Activated B cell treated with CpG ODN at 0.5 μM for 24 hours (primary cell): ENCODE measurements at regions of chr16 and their contacts with region 1.

Region 1: DNA sequence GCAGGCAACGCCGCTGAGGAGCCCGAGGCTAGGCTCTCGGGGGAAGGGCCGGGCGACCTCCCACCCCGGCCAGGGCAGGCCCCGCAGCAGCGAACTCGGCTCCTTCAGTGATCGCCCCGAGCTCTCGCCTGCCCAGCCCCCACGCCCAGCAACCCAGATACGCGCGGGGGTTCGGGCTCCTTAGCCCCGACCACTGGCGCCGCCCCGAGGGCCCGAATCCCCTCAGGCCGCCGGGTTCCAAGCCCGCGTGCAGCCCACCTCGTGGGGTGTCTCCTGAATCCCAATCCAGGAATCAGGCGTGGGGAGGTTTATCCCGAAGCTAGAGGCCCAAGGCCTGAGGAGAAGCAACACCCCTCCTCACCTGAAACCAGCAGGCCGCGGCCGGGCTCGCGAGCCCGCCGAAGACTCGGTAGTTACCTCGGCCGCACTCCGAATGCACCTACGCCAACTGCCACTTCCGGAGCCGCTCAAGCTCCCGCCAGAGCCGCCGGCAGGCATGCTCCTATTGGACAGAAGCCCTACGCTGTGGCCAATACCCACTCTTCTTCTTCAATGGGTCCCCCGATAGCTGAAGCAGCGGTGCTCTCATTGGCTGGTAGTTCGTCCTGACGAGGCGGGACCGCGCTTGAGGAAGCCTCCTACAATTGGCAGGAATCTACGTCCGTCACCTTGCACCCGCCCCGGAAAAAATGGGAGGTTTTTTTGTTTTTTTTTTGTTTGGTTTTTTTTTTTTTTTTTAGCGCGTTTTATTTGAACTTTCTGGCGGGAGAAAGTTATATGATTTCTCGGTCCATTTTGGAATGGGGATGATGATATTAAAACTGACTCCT is at the start of gene RFWD3:
- DNase-seq: peak; percentile 78
- ATAC-seq: peak; percentile 99
- H3K4me3 Mint-ChIP-seq: peak within 1 kb of the TSS; percentile 94
- H3K27ac Mint-ChIP-seq: peak within 1 kb of the TSS; percentile 90
- H3K4me1 Mint-ChIP-seq: peaks cover 38% of the 10 kb centered on the region
- H3K27me3 Mint-ChIP-seq: no peaks in the 10 kb centered on the region
- CTCF ChIP-seq: no peak
- total RNA-seq, gene RFWD3: 57.9 and 63.2 TPM in 2 replicates

Region 2: GRCh38 chr16:74684131-74684530 is 17.5 kb after region 1 on chr16:
- CTCF ChIA-PET with region 1: no interaction called
- POLR2A ChIA-PET with region 1: interaction called, 28 read pairs
- intact Hi-C with region 1: loop called (anchors 2 kb)
- DNase-seq: no peak
- ATAC-seq: no peak
- H3K4me3 Mint-ChIP-seq: peak overlapping the region; percentile 7
- H3K27ac Mint-ChIP-seq: no peak overlapping the region
- H3K4me1 Mint-ChIP-seq: peaks cover 9% of the 10 kb centered on the region
- H3K27me3 Mint-ChIP-seq: no peaks in the 10 kb centered on the region
- CTCF ChIP-seq: no peak

Region 3: DNA sequence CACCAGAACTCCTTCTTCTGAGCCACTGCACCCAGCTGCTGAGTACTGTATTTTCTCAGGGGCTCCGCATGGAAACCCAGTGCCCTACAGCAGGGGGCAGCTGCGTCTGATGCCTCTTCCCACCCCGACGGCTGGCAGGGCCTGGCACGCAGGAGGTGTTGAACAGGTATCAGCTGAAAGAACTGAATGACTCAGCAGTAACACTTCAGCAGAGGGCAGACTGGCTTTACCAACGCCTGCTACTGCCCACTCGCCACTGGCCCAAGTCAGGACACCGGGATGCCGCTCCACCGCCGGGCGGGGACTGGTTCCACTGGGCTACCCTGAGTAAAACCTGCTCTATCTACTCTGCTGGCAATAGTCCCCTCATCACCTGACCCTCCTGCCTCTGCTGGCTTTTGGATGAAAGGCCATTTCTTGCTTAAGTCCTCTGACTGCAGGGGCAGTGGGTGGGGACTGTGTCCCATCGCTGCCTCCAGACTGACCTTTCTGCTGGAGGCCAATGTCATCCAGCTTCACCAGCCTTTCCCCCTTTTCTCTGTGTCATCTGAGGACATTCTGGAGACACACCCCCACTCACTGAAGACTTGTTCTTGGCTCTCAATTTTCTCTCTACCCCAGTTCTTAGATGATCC is 208.4 kb after region 1 on chr16:
- CTCF ChIA-PET with region 1: no interaction called
- POLR2A ChIA-PET with region 1: no interaction called
- intact Hi-C with region 1: no loop called
- DNase-seq: no peak
- ATAC-seq: no peak
- H3K4me3 Mint-ChIP-seq: no peak overlapping the region
- H3K27ac Mint-ChIP-seq: no peak overlapping the region
- H3K4me1 Mint-ChIP-seq: no peaks in the 10 kb centered on the region
- H3K27me3 Mint-ChIP-seq: no peaks in the 10 kb centered on the region
- CTCF ChIP-seq: no peak

Region 4: DNA sequence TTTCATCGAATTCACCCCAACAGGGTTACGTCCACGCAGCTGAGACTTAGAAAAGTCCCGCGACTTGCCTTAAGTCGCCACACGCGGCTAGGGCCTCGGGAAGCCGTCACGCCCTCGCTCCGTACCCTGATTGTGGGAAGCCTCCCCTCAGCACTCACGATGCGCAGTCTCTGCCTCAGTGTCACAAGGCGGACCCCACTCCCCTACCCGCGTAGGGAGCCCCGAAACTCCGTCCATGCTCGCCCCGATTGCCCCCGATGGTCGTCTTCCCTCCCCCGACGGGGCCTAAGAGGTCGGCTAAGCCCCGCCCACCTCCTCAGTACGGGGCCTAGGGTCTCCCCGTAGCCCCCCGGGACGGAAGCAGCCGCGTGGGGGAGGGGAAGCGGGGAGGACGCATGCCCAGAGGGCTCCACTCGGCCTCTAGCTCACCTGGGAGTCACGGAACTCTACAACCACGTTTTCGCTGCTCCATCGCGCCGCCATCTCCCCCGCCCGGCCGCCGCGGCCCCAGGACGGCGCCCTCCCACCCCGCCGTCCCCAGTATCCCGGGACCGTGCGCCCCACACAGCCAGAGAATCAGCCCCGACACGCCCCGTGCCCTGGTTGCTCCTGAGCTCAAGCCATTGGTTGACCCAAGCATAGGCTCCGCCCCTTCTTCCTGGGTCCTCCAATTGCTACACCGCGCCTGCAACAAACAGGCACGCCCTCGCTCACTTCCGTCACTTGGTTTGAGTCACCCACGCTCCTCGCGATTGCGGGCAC is 318.1 kb after region 1 on chr16 and contains the start of gene WDR59:
- CTCF ChIA-PET with region 1: no interaction called
- POLR2A ChIA-PET with region 1: interaction called, 3 read pairs
- intact Hi-C with region 1: loop called (anchors 2 kb)
- DNase-seq: peak; percentile 90
- ATAC-seq: peak; percentile 99
- H3K4me3 Mint-ChIP-seq: peak within 1 kb of the TSS; percentile 96
- H3K27ac Mint-ChIP-seq: peak within 1 kb of the TSS; percentile 88
- H3K4me1 Mint-ChIP-seq: peaks cover 20% of the 10 kb centered on the region
- H3K27me3 Mint-ChIP-seq: no peaks in the 10 kb centered on the region
- CTCF ChIP-seq: no peak
- total RNA-seq, gene WDR59: 80.8 and 93.3 TPM in 2 replicates